ENCODE measurements at regions of chr4 and their contacts with region 1.

Region 1: GRCh38 chr4:83582289-83582769 is 46.4 kb downstream of the GPAT3 start:
- DNase-seq: no peak

Region 2: GRCh38 chr4:83535520-83536361 is 46.6 kb before region 1 on chr4 and contains the start of gene GPAT3:
- intact Hi-C with region 1: loop called (anchors 2 kb)
- DNase-seq: peak; percentile 95
- total RNA-seq, gene GPAT3: 38.5 TPM

Region 3: DNA sequence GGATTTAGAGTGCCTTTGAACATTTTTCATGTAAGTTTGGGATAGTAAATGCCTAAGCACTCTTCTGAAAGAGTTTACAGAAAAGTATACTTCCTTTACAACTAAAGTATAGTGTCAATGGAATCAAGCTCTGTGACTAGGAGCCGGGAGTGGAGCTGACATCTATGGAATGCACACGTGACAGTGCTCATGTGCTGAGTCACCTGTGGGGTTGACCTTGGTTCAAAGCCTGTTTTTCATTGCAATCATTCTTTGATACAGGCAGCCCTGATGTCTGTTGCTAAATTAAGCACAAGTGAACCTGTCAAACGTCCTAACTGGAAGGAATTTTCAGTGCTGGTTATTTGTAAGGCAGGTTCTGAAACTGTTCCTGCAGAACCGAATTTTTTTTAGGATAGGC is 36.1 kb after region 1 on chr4:
- intact Hi-C with region 1: loop called (anchors 5 kb)
- DNase-seq: no peak

Region 4: DNA sequence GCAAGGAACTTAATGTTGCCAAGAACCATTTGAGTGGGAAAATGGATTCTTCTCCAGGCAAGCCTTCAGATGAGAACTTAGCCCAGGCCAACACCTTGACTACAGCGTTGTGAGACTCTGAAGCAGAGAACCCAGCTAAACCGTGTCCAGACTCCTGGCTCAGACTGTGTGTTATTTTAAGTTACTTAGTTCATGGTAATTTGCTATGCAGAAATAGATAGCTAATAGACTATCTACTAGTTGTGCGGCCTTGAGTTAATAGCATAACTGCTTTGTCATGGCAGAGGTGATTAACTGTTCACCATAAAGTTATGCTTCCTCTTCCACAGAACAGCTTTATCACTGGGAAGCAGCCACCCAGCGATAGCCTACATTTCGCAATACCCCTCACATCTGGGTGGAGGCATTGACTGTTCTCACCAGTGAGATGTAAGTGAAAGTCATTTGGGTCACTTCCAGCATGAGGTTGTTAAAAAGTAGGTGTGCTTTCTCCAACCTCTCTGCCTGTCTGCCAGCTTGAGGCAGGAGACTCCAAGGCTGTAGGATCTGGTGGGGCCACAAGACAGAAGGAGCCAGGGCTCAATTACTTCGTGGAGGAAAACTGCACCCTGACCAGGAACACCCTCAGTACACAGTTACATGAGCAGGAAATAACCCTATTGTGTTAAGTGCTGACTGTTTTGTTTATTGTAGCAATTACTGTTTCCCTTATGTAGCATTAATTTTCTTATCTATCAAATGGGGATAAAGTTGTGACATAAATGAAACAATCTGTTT is 47.8 kb after region 1 on chr4:
- intact Hi-C with region 1: loop called (anchors 5 kb)
- DNase-seq: peak; percentile 84